ENCODE measurements at regions of chr10 and their contacts with region 1.

Region 1: DNA sequence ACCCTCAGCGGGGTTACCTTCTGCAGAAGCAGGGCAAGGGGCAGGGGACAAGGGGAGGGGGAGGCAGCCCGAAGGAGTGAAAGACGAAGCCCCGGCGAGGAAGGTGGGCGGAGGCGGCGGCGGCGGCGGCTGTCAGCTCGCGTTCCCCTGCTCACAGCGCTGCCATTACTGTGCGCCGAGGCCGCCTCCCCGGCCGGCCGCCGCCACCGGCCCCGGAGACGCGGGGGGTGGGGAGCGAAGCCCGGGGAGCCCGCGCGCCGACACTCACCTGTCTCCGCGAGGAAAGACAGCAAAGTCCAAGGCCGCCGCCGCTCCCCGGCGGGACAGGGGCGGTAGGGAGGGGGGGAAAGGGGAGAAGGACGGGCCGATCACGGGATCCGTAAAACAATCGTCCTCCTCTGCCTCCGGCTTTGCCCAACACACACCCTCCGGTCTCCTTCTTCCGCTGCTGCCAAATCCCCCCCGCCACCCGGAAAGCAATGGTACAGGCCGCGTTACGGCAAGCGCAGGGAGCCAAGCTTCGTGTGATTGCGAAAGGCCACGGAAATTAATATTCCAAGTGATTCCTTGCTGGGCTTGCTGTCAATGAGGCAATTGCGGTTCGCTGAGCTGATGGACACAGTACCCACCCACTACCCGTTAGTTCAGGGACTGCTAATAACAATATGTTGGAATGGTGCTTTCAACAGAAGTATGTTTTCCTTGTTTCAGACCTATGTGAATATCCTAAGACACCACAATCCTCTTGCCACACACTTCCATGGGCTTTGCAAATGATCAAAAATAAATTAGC is at the start of gene CUL2:
- DNase-seq: peak; percentile 92 to 95 (median 93)
- ATAC-seq: peak; percentile 98
- H3K4me3 ChIP-seq: peak within 1 kb of the TSS; percentile 71
- H3K27ac ChIP-seq: peak within 1 kb of the TSS; percentile 95
- H3K4me1 ChIP-seq: peaks cover 0 to 15% of the 10 kb centered on the region in 2 experiments; a peak in 3 of 5 replicates
- H3K27me3 ChIP-seq: no peaks in the 10 kb centered on the region
- CTCF ChIP-seq: no peak
- EP300 ChIP-seq: peak; percentile 30; the same call in 1 of the 2 replicates
- POLR2A ChIP-seq: no peak; the same call in 1 of the 2 replicates
- RAD21 ChIP-seq: no peak
- polyA plus RNA-seq, gene CUL2: 18.1 to 21.1 TPM

Region 2: DNA sequence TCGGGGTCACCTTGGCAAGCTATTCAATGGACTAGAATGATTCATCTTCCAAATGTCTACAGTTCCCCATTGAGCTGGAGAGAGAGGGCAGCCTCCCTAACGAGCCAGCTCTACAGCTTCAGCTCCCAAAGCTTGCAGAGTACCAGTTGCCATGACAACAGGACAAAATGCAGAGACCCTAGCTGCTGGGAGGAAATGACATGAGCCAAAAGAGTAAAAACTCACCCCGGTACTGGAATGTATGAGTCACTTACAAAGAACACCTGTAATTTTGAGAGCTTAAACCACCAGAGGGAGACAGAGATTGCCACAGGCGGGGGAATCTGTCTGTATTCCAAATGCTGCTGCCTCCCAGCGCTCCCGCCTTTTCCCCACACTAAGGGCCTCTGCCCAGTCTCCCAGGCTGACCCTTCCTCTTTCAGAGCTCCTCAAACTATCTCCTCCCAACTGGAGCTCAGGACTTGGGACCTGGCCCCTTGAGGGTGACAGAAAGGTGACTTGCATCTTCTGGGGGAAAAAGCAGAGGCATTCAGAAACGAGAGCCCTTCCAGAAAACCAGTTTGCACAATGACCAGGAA is 95.7 kb before region 1 on chr10:
- CTCF ChIA-PET with region 1: no interaction called
- POLR2A ChIA-PET with region 1: no interaction called
- in situ Hi-C with region 1: no loop called
- intact Hi-C with region 1: loop called (anchors 10 kb)
- DNase-seq: peak; percentile 56 to 72 (median 64)
- ATAC-seq: peak; percentile 89
- H3K4me3 ChIP-seq: no peak overlapping the region
- H3K27ac ChIP-seq: no peak overlapping the region
- H3K4me1 ChIP-seq: no peaks in the 10 kb centered on the region
- H3K27me3 ChIP-seq: no peaks in the 10 kb centered on the region; a peak in 1 of 5 replicates
- CTCF ChIP-seq: peak; percentile 81 to 88 (median 82)
- EP300 ChIP-seq: no peak
- POLR2A ChIP-seq: no peak
- RAD21 ChIP-seq: peak; percentile 57 to 84

Region 3: GRCh38 chr10:35889971-35890677 is 799.8 kb after region 1 on chr10:
- CTCF ChIA-PET with region 1: no interaction called
- POLR2A ChIA-PET with region 1: no interaction called
- in situ Hi-C with region 1: no loop called
- intact Hi-C with region 1: no loop called
- DNase-seq: no peak
- ATAC-seq: no peak
- H3K4me3 ChIP-seq: no peak overlapping the region
- H3K27ac ChIP-seq: no peak overlapping the region
- H3K4me1 ChIP-seq: no peaks in the 10 kb centered on the region
- H3K27me3 ChIP-seq: no peaks in the 10 kb centered on the region
- CTCF ChIP-seq: no peak
- EP300 ChIP-seq: no peak
- POLR2A ChIP-seq: no peak
- RAD21 ChIP-seq: no peak